ENCODE measurements at regions of chr17 and their contacts with region 1.

Region 1: DNA sequence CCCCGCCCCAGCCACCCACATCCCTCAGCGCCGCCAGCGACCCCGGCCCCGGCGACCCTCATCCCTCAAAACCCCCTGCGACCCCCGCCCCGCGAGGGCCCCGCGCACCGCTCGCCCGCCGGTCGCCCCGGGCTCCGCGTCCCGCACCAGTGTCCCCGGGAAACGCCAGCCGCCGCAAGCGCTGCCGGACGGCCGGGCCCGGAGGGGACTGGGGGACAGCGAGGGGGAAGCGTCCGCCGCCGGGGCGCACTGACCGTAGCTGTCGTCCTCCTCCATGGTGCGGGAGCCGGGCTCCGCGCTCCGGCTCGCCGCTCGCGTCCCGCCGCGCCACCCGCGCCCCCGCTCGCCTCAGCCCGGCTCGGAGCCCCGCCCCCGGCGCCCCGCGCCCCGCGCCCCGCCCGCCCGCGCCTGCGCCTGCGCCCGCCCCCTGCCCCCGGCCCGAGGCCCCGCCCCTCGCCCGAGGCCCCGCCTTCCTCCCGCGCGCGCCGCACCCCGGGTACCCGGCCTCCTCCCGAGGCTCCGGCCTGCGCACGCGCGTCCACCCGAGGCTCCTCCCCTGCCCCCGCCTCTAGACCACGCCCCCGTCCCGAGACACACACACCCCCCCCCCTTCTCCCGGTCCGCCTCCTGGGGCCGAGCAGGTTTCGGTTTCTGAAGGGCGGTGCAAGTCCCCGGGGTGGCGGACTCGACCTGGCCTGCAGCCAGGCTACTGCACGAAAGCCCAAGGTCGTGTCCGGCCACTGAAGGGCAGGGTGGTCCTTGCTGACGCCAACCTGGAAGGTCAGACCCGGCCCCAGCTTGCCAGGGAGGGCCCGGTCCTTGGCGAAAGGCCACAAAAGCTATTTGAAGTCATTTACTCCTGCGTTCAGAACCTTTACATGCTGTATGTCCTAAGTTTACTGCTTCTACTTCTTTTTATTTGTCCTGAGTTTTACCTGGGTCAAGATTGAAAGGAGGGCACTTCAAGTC is at the start of gene CYTH1:
- DNase-seq: peak; percentile 89 to 97
- H3K4me3 ChIP-seq: peak within 1 kb of the TSS; percentile 90 to 92
- H3K27ac ChIP-seq: peak within 1 kb of the TSS; percentile 87 to 91
- H3K4me1 ChIP-seq: peaks cover 0 to 5% of the 10 kb centered on the region in 2 donors
- H3K27me3 ChIP-seq: no peaks in the 10 kb centered on the region
- CTCF ChIP-seq: no peak
- total RNA-seq, gene CYTH1: 46.5 TPM

Region 2: GRCh38 chr17:78432226-78433012 is 349.8 kb before region 1 on chr17:
- intact Hi-C with region 1: no loop called
- DNase-seq: no peak
- H3K4me3 ChIP-seq: no peak overlapping the region
- H3K27ac ChIP-seq: no peak overlapping the region
- H3K4me1 ChIP-seq: no peaks in the 10 kb centered on the region
- H3K27me3 ChIP-seq: no peaks in the 10 kb centered on the region
- CTCF ChIP-seq: no peak

Region 3: GRCh38 chr17:78759203-78759968 is 22.8 kb before region 1 on chr17:
- intact Hi-C with region 1: no loop called
- DNase-seq: no peak
- H3K4me3 ChIP-seq: no peak overlapping the region
- H3K27ac ChIP-seq: no peak overlapping the region
- H3K4me1 ChIP-seq: no peaks in the 10 kb centered on the region
- H3K27me3 ChIP-seq: no peaks in the 10 kb centered on the region
- CTCF ChIP-seq: no peak

Region 4: DNA sequence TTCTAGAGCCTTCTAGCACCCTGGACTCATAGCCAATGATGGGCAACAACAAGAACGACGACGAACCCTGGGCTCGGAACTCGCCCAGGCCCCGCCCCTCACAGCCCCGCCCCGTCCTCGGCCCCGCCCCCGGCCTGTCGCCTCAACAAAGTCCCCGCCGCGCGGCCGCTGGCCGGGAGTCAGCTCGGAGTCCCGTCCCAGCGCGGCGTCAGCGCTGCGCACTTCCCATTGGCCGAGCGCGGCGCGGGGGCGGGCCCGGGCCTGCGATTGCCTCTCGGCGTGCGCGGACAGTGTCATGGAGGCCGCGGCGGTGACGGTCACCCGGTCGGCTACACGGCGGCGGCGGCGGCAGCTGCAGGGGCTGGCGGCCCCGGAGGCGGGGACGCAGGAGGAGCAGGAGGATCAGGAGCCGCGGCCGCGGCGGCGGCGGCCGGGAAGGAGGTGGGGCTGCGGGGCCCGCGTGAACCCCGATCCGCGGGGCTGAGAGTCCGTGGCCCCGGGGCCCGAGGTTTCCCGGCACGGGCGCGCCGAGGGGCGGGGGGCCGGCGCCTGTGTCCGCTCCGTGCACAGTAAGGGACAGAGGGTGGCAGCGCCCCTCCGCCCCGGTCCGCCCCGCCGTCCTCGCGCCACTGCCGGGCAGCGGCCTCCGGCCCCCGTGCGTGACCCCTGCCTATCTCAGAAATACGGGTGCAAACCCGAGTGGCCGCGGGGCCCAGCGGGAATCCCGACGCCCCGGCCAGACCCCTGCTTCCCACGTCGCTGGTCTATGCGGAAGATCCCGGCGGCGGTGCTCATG is 292.6 kb after region 1 on chr17 and contains the start of gene ENGASE:
- intact Hi-C with region 1: loop called (anchors 10 kb)
- DNase-seq: peak; percentile 89 to 98
- H3K4me3 ChIP-seq: peak within 1 kb of the TSS; percentile 77 to 82
- H3K27ac ChIP-seq: peak within 1 kb of the TSS; percentile 80 to 84
- H3K4me1 ChIP-seq: peaks cover 3 to 15% of the 10 kb centered on the region in 2 donors
- H3K27me3 ChIP-seq: no peaks in the 10 kb centered on the region
- CTCF ChIP-seq: no peak
- total RNA-seq, gene ENGASE: 13.2 TPM

Measured in ascending aorta (tissue), 2 donors.